ENCODE measurements at regions of chr4 and their contacts with region 1.

Region 1: GRCh38 chr4:26076000-26076587 is 162.1 kb downstream of the SMIM20 start:
- DNase-seq: peak; percentile 78
- ATAC-seq: peak; percentile 53
- H3K4me3 Mint-ChIP-seq: peak overlapping the region; percentile 26
- H3K27ac Mint-ChIP-seq: peak overlapping the region; percentile 90
- H3K4me1 Mint-ChIP-seq: peaks cover 73% of the 10 kb centered on the region
- H3K27me3 Mint-ChIP-seq: peaks cover 6% of the 10 kb centered on the region

Region 2: GRCh38 chr4:25913851-25914669 is 162.0 kb before region 1 on chr4 and contains the start of gene SMIM20:
- CTCF ChIA-PET with region 1: no interaction called
- POLR2A ChIA-PET with region 1: no interaction called
- intact Hi-C with region 1: loop called in 1 of 2 experiments (anchors 1 kb)
- DNase-seq: peak; percentile 94
- ATAC-seq: peak; percentile 96
- H3K4me3 Mint-ChIP-seq: peak within 1 kb of the TSS; percentile 93
- H3K27ac Mint-ChIP-seq: peak within 1 kb of the TSS; percentile 93
- H3K4me1 Mint-ChIP-seq: peaks cover 22% of the 10 kb centered on the region
- H3K27me3 Mint-ChIP-seq: no peaks in the 10 kb centered on the region
- total RNA-seq, gene SMIM20: 15.6 to 23.0 TPM

Region 3: GRCh38 chr4:25970226-25970675 is 105.8 kb before region 1 on chr4:
- CTCF ChIA-PET with region 1: no interaction called
- POLR2A ChIA-PET with region 1: no interaction called
- intact Hi-C with region 1: no loop called
- DNase-seq: no peak
- ATAC-seq: no peak
- H3K4me3 Mint-ChIP-seq: no peak overlapping the region
- H3K27ac Mint-ChIP-seq: no peak overlapping the region
- H3K4me1 Mint-ChIP-seq: no peaks in the 10 kb centered on the region
- H3K27me3 Mint-ChIP-seq: peaks cover 10% of the 10 kb centered on the region

Region 4: GRCh38 chr4:26015133-26015651 is 60.9 kb before region 1 on chr4:
- CTCF ChIA-PET with region 1: no interaction called
- POLR2A ChIA-PET with region 1: no interaction called
- intact Hi-C with region 1: no loop called
- DNase-seq: no peak
- ATAC-seq: no peak
- H3K4me3 Mint-ChIP-seq: no peak overlapping the region
- H3K27ac Mint-ChIP-seq: no peak overlapping the region
- H3K4me1 Mint-ChIP-seq: peaks cover 5% of the 10 kb centered on the region
- H3K27me3 Mint-ChIP-seq: peaks cover 41% of the 10 kb centered on the region

Region 5: DNA sequence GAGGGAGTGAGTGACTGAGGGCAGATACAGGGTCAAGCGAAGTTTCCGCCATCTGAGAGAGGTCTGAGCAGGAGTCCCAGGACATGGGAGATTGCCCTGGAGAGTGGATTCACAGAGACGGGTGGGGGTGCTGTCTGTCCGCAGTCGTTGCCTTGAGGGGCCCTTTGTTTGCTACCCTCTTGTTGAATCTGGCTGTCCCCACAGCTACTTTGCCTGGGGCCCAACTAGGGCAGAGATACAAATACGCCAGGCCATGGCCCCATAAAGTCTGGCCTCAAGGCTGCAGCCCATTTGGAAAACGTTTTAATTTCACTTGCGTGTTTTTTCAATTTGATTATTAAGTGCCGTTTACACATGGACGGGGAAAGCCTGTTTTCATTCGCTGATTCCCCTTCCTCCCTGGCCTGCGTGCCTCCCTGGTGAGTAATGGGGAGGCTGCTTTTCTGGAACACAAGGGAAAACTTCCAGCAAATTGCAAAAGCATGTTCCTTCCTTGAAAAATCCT is 27.7 kb before region 1 on chr4:
- CTCF ChIA-PET with region 1: no interaction called
- POLR2A ChIA-PET with region 1: no interaction called
- intact Hi-C with region 1: no loop called
- DNase-seq: no peak
- ATAC-seq: no peak
- H3K4me3 Mint-ChIP-seq: no peak overlapping the region
- H3K27ac Mint-ChIP-seq: no peak overlapping the region
- H3K4me1 Mint-ChIP-seq: peaks cover 2% of the 10 kb centered on the region
- H3K27me3 Mint-ChIP-seq: peaks cover 14% of the 10 kb centered on the region

Region 6: GRCh38 chr4:26088433-26088928 is 12.4 kb after region 1 on chr4:
- CTCF ChIA-PET with region 1: interaction called, 15 read pairs
- POLR2A ChIA-PET with region 1: interaction called, 20 read pairs
- intact Hi-C with region 1: loop called (anchors 1 kb)
- DNase-seq: peak; percentile 55
- ATAC-seq: peak; percentile 90
- H3K4me3 Mint-ChIP-seq: peak overlapping the region; percentile 27
- H3K27ac Mint-ChIP-seq: peak overlapping the region; percentile 84
- H3K4me1 Mint-ChIP-seq: peaks cover 47% of the 10 kb centered on the region
- H3K27me3 Mint-ChIP-seq: peaks cover 15% of the 10 kb centered on the region

Region 7: GRCh38 chr4:26179316-26179760 is 103.2 kb after region 1 on chr4:
- CTCF ChIA-PET with region 1: no interaction called
- POLR2A ChIA-PET with region 1: interaction called, 4 read pairs
- intact Hi-C with region 1: loop called in 1 of 2 experiments (anchors 1 kb)
- DNase-seq: peak; percentile 48
- ATAC-seq: peak; percentile 67
- H3K4me3 Mint-ChIP-seq: no peak overlapping the region
- H3K27ac Mint-ChIP-seq: peak overlapping the region; percentile 55
- H3K4me1 Mint-ChIP-seq: peaks cover 17% of the 10 kb centered on the region
- H3K27me3 Mint-ChIP-seq: no peaks in the 10 kb centered on the region

Region 8: DNA sequence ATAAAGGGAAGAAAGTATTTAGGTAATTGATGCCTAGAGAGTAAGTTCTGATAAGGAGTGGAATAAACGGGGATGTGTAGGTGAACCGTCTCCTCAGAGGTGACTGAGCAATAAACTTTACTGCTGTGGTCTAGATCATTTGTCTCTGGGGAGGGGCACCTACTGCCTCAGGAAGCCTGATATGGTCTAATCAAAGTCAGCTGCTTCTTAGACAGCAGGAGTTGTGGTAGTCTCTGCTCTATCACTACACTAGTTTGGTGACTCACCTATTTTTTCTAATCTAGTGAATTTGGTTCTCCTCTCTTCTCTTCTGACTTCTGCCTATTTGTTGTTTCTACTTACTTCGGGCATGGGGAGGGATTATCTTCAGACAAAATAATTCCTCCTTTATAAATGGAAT is 689.4 kb after region 1 on chr4:
- CTCF ChIA-PET with region 1: no interaction called
- POLR2A ChIA-PET with region 1: no interaction called
- intact Hi-C with region 1: no loop called
- DNase-seq: no peak
- ATAC-seq: peak; percentile 47
- H3K4me3 Mint-ChIP-seq: no peak overlapping the region
- H3K27ac Mint-ChIP-seq: no peak overlapping the region
- H3K4me1 Mint-ChIP-seq: peaks cover 3% of the 10 kb centered on the region
- H3K27me3 Mint-ChIP-seq: no peaks in the 10 kb centered on the region

Region 9: DNA sequence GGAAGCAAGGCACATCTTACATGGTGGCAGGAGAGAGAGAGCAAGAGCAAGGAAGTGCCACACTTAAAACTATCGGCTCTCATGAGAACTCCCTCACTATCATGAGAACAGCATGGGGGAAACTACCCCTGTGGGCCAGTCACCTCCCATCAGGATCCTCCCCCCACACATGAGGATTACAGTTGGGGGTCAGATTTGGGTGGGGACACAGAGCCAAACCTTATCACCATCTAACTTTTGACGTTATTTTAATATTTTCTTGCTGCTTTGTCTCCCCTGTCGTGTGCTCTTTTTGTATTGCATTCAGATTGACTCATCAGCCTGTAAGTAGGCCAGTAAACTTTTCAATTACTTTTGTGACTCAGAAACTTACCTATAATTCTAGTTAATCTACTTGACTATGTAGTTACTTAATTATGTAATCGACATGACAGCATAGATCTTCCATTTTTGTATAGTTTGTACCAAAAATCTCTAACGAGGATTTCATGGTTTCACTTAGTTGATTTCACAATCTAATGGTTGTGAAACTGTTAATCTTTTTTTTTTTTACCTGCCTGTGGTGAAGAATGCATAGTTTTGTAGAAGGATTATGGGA is 802.8 kb after region 1 on chr4:
- CTCF ChIA-PET with region 1: no interaction called
- POLR2A ChIA-PET with region 1: no interaction called
- intact Hi-C with region 1: loop called (anchors 5 kb)
- DNase-seq: peak; percentile 30
- ATAC-seq: peak; percentile 82
- H3K4me3 Mint-ChIP-seq: peak overlapping the region; percentile 13
- H3K27ac Mint-ChIP-seq: peak overlapping the region; percentile 85
- H3K4me1 Mint-ChIP-seq: peaks cover 75% of the 10 kb centered on the region
- H3K27me3 Mint-ChIP-seq: no peaks in the 10 kb centered on the region

Measured in activated CD4-positive, alpha-beta T cell treated with anti-CD3 and anti-CD28 coated beads for 36 hours (primary cell).